Common myeloid progenitor, CD34-positive (primary cell): ENCODE measurements at regions of chr19 and their contacts with region 1.

Region 1: GRCh38 chr19:33778089-33778791 is 18.4 kb upstream of the KCTD15 start:
- DNase-seq: peak; percentile 73 to 86 (median 80)
- H3K4me3 ChIP-seq: peak overlapping the region in 2 of 7 experiments; percentile 28 to 40
- H3K27ac ChIP-seq: no peak overlapping the region
- H3K4me1 ChIP-seq: peaks cover 0 to 15% (median 7%) of the 10 kb centered on the region in 4 experiments
- H3K27me3 ChIP-seq: peaks cover 0 to 14% (median 8%) of the 10 kb centered on the region in 5 experiments

Region 2: GRCh38 chr19:33639035-33639681 is 139.1 kb before region 1 on chr19:
- CTCF ChIA-PET with region 1: no interaction called
- POLR2A ChIA-PET with region 1: no interaction called
- DNase-seq: no peak
- H3K4me3 ChIP-seq: no peak overlapping the region
- H3K27ac ChIP-seq: no peak overlapping the region
- H3K4me1 ChIP-seq: no peaks in the 10 kb centered on the region
- H3K27me3 ChIP-seq: peaks cover 0 to 43% (median 9%) of the 10 kb centered on the region in 5 experiments

Region 3: DNA sequence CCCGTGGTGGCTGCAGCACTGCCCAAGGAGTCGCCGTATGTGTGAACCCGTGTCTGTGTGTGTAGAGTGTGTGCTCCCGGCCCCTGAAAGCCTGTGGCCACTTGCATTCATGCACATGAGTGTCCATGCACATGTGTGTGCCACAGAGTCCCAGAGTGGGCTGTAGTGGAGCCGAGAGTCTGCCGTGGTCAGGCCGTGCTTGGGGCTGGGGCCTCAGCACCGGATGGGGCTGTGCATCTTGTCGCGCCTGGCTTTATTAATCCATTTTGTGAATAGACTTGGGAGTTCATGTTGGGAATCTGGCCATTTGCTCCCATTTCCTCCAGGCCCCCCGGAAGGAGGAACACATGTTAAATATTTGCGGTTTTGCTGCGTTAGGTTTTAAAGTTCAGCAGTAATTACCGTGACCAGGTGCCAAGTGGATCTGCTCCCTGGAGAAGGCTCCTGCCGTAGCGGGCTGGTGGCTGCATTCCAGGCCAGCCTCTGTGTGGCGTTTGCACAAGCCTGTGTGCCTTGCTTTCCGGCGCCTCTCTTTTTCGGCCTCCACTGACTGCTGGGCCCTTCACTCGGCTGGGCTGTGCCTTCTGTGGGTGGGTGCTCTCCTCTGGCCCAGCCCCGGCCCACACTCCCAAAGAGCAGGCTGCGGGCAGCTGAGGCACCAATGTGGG is 50.8 kb before region 1 on chr19:
- CTCF ChIA-PET with region 1: no interaction called
- POLR2A ChIA-PET with region 1: no interaction called
- DNase-seq: no peak
- H3K4me3 ChIP-seq: no peak overlapping the region
- H3K27ac ChIP-seq: no peak overlapping the region
- H3K4me1 ChIP-seq: no peaks in the 10 kb centered on the region
- H3K27me3 ChIP-seq: peaks cover 0 to 6% (median 3%) of the 10 kb centered on the region in 5 experiments

Region 4: DNA sequence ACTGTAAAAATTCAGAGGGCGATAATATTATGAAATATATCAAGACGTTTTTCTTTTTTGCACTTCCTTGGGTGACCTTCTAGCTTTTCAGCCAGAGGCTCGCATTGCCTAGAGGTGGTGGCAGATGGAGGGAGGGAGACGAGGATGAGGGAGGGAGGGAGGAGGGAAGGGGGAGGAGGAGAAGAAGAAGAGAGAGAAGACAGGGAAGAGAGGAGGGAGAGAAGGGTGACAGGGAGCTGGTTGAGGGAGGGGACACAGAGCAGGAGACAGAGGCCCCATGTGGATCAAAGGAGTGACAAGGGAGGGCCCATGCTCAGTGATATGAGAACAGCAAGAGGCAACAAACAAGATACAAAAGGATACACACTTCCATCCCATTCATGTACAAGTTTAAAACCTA is 10.4 kb after region 1 on chr19:
- CTCF ChIA-PET with region 1: interaction called, 13 read pairs
- POLR2A ChIA-PET with region 1: no interaction called
- DNase-seq: no peak
- H3K4me3 ChIP-seq: no peak overlapping the region
- H3K27ac ChIP-seq: no peak overlapping the region
- H3K4me1 ChIP-seq: peaks cover 0 to 2% (median 0%) of the 10 kb centered on the region in 4 experiments
- H3K27me3 ChIP-seq: peaks cover 0 to 4% (median 0%) of the 10 kb centered on the region in 5 experiments

Region 5: GRCh38 chr19:33795370-33796163 is 17.3 kb after region 1 on chr19:
- CTCF ChIA-PET with region 1: interaction called, 13 read pairs
- POLR2A ChIA-PET with region 1: no interaction called
- DNase-seq: peak; percentile 75 to 88 (median 87)
- H3K4me3 ChIP-seq: peak overlapping the region; percentile 60 to 89 (median 78)
- H3K27ac ChIP-seq: peak overlapping the region; percentile 64 to 85
- H3K4me1 ChIP-seq: peaks cover 0 to 27% (median 14%) of the 10 kb centered on the region in 4 experiments
- H3K27me3 ChIP-seq: no peaks in the 10 kb centered on the region

Region 6: GRCh38 chr19:33832633-33833032 is 54.4 kb after region 1 on chr19:
- CTCF ChIA-PET with region 1: no interaction called
- POLR2A ChIA-PET with region 1: no interaction called
- DNase-seq: no peak
- H3K4me3 ChIP-seq: no peak overlapping the region
- H3K27ac ChIP-seq: no peak overlapping the region
- H3K4me1 ChIP-seq: no peaks in the 10 kb centered on the region
- H3K27me3 ChIP-seq: no peaks in the 10 kb centered on the region

Region 7: GRCh38 chr19:33998739-33999345 is 220.6 kb after region 1 on chr19:
- CTCF ChIA-PET with region 1: interaction called, 19 read pairs
- POLR2A ChIA-PET with region 1: no interaction called
- DNase-seq: peak; percentile 14 to 42 (median 41)
- H3K4me3 ChIP-seq: no peak overlapping the region
- H3K27ac ChIP-seq: no peak overlapping the region
- H3K4me1 ChIP-seq: peaks cover 0 to 6% (median 2%) of the 10 kb centered on the region in 4 experiments
- H3K27me3 ChIP-seq: peaks cover 0 to 3% (median 0%) of the 10 kb centered on the region in 5 experiments

Region 8: DNA sequence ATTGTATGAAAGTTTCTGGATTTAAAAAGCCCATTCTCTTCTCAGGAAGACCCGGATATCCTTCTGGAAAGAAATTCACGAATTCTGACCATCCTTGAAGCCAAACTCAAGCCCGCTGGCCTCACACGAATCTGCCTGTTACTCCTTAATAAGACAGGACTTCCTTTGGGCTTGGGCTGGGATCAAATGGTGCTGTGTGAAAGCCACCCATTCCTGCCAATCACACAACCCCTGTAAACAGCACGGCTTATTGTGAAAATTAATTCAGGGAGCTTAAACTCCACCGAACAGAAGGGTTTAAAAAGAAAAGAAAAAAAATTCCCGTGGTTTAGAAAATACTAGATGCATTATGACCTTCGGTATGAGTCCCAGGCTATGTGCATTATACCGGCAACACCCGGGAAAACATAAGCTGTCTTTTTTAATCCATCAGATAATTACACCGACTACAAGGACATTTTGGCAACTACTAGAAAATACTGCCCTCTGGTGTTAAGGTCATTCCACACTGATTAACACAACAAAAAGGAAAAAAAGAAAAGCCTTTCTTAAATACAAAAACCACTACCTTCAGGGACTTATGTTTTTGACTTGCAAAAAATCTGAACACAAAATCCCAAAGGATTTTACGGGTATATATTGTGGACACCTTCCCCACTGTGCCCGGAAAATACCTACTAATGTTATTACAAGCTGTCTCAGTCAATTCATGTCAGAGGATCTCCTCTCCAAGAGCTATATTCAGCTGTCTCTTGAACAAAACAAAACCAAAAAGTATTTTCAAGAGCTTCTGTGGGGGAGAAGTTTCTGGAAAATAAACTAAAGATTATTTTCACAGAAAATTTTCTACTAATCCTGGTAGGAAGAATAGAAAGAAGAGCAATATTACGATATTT is 318.0 kb after region 1 on chr19:
- CTCF ChIA-PET with region 1: interaction called, 36 read pairs
- POLR2A ChIA-PET with region 1: no interaction called
- DNase-seq: peak; percentile 57 to 78 (median 73)
- H3K4me3 ChIP-seq: no peak overlapping the region
- H3K27ac ChIP-seq: no peak overlapping the region
- H3K4me1 ChIP-seq: no peaks in the 10 kb centered on the region
- H3K27me3 ChIP-seq: peaks cover 0 to 3% (median 3%) of the 10 kb centered on the region in 5 experiments